ENCODE measurements at regions of chr12 and their contacts with region 1.

Region 1: GRCh38 chr12:12008931-12009611 is 61.7 kb upstream of the BCL2L14 start:
- DNase-seq: peak; percentile 75
- ATAC-seq: peak; percentile 76
- H3K4me3 Mint-ChIP-seq: peak overlapping the region; percentile 28
- H3K27ac Mint-ChIP-seq: peak overlapping the region; percentile 84
- H3K4me1 Mint-ChIP-seq: peaks cover 69% of the 10 kb centered on the region
- H3K27me3 Mint-ChIP-seq: peaks cover 14% of the 10 kb centered on the region

Region 2: GRCh38 chr12:11535127-11535526 is 473.9 kb before region 1 on chr12:
- CTCF ChIA-PET with region 1: no interaction called
- DNase-seq: no peak
- ATAC-seq: no peak
- H3K4me3 Mint-ChIP-seq: no peak overlapping the region
- H3K27ac Mint-ChIP-seq: no peak overlapping the region
- H3K4me1 Mint-ChIP-seq: peaks cover 2% of the 10 kb centered on the region
- H3K27me3 Mint-ChIP-seq: peaks cover 18% of the 10 kb centered on the region

Region 3: GRCh38 chr12:11648831-11649702 is 360.0 kb before region 1 on chr12 and contains the start of gene ETV6:
- CTCF ChIA-PET with region 1: interaction called, 10 read pairs
- DNase-seq: peak; percentile 82
- ATAC-seq: peak; percentile 62
- H3K4me3 Mint-ChIP-seq: peak within 1 kb of the TSS; percentile 82
- H3K27ac Mint-ChIP-seq: peak within 1 kb of the TSS; percentile 96
- H3K4me1 Mint-ChIP-seq: peaks cover 29% of the 10 kb centered on the region
- H3K27me3 Mint-ChIP-seq: no peaks in the 10 kb centered on the region
- total RNA-seq, gene ETV6: 29.4 to 32.6 TPM

Region 4: GRCh38 chr12:11797317-11797913 is 211.7 kb before region 1 on chr12:
- CTCF ChIA-PET with region 1: no interaction called
- DNase-seq: no peak
- ATAC-seq: no peak
- H3K4me3 Mint-ChIP-seq: no peak overlapping the region
- H3K27ac Mint-ChIP-seq: no peak overlapping the region
- H3K4me1 Mint-ChIP-seq: peaks cover 20% of the 10 kb centered on the region
- H3K27me3 Mint-ChIP-seq: no peaks in the 10 kb centered on the region

Region 5: GRCh38 chr12:11906286-11906935 is 102.7 kb before region 1 on chr12:
- CTCF ChIA-PET with region 1: no interaction called
- DNase-seq: no peak
- ATAC-seq: no peak
- H3K4me3 Mint-ChIP-seq: no peak overlapping the region
- H3K27ac Mint-ChIP-seq: no peak overlapping the region
- H3K4me1 Mint-ChIP-seq: peaks cover 24% of the 10 kb centered on the region
- H3K27me3 Mint-ChIP-seq: peaks cover 4% of the 10 kb centered on the region

Region 6: GRCh38 chr12:11981121-11981733 is 27.8 kb before region 1 on chr12:
- CTCF ChIA-PET with region 1: interaction called, 35 read pairs
- DNase-seq: peak; percentile 81
- ATAC-seq: peak; percentile 91
- H3K4me3 Mint-ChIP-seq: peak overlapping the region; percentile 28
- H3K27ac Mint-ChIP-seq: peak overlapping the region; percentile 96
- H3K4me1 Mint-ChIP-seq: peaks cover 46% of the 10 kb centered on the region
- H3K27me3 Mint-ChIP-seq: no peaks in the 10 kb centered on the region

Region 7: DNA sequence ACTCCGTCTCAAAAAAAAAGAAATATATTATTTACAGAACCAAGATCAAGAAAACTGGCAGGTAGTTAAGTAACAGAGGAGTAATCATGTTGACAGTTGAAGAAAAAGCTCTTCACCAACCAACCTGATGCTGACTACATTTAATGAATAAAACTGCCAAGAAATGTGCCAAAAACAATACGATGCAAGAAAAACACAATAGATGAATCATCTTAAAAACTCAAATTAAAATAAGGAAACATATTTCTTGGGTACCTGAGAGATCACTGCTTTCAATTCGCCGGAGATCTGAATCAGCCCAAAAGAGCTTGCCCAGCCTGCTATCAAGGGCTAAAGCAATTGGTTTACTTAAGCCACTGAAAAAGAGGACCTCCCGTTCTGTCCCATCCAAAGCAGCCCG is 138.0 kb after region 1 on chr12:
- CTCF ChIA-PET with region 1: no interaction called
- DNase-seq: no peak
- ATAC-seq: no peak
- H3K4me3 Mint-ChIP-seq: no peak overlapping the region
- H3K27ac Mint-ChIP-seq: no peak overlapping the region
- H3K4me1 Mint-ChIP-seq: no peaks in the 10 kb centered on the region
- H3K27me3 Mint-ChIP-seq: peaks cover 55% of the 10 kb centered on the region

Measured in activated CD8-positive, alpha-beta memory T cell treated with anti-CD3 and anti-CD28 coated beads, Interleukin-2, amount 10 ng/mL, durations not matched to agents 7 days and 5 days (primary cell).